Left cardiac atrium (tissue), 4 donors: ENCODE measurements at regions of chr14 and their contacts with region 1.

Region 1: GRCh38 chr14:69715725-69716477 is 51.0 kb upstream of the SRSF5 start:
- DNase-seq: peak; percentile 77
- ATAC-seq: peak; percentile 66 to 72

Region 2: DNA sequence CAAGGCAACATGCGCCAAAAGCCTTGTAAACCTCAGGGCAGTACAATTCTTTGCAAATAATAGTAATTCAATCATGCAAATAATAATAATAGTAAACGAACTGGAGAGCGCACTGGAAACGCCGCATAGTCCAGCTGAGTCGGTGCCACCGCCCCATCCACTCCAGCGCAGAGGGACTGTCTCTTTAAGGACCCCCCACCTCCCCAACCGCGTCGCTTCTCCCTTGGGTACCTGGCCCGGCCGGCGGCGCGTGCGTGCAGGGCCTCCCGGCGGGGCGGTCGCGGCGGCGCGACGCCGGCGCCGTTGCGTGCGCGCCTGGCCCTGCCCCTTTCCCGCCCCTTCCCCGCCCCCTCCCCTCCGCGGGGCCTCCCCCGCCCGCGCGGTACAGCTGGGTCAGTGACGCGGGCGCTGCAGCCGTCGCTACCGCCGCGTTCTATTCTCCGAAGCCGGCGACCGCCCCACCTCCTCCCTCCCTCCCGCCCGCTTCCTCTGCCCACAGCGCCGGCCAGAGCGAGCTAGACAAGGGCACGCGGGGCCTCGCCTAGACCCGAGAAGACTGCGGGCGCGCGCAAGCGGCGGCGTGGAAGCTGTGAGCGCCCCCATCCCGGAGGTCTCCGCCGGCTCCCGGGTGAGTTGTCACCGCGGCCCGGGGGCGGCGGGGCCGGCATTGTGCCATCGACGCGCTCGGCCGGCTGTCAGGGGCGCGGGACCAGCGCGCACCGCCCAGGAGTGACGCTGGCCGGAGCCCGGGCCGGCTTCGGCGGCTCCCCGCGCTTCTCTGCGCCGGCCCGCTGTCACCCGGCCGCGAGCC is 104.5 kb before region 1 on chr14 and contains the start of gene SUSD6:
- intact Hi-C with region 1: loop called in 1 of 2 experiments (anchors 5 kb)
- DNase-seq: peak; percentile 92
- ATAC-seq: peak; percentile 91 to 92
- total RNA-seq, gene SUSD6: 21.8 to 28.1 TPM

Region 3: GRCh38 chr14:69625299-69626131 is 90.4 kb before region 1 on chr14:
- intact Hi-C with region 1: no loop called
- DNase-seq: peak; percentile 71
- ATAC-seq: peak; percentile 83 to 91

Region 4: DNA sequence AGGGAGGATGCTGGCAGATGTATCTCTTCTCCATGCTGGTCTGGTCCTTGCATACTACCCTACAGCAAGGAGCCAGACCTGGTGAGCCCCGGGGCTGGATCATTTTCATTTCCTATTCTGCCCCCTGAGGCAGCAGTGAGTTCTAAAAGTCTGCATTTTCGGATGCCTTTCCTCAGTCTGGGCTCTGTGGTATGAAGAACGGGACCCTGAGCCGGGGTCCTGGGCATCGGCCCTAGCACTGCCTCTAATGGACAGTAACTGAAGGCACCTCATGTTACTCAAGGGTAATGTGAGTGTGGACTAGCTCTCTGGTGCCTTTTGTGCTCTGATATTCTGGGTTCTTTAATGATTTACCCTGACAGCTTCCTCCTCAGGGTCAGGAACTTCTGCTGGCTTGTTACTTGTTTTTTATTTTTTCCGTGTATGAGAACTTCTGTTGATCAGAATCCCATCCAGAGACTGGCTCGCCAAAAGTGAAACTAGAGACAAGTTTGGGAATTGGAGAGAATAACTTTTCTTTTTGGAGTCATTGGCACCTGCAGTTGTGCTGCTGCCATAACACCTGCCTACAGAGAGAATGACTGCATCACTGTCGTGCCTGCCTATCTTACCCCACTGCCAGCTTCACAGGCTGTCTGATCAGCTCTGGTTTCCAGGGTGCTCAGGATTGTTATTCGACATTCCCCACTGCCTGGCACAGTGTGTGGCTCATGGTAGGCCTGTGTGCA is 42.2 kb before region 1 on chr14:
- intact Hi-C with region 1: loop called in 1 of 2 experiments (anchors 2 kb)
- DNase-seq: no peak
- ATAC-seq: peak in 1 of 2 donors; percentile 21